ENCODE measurements at regions of chr17 and their contacts with region 1.

Region 1: DNA sequence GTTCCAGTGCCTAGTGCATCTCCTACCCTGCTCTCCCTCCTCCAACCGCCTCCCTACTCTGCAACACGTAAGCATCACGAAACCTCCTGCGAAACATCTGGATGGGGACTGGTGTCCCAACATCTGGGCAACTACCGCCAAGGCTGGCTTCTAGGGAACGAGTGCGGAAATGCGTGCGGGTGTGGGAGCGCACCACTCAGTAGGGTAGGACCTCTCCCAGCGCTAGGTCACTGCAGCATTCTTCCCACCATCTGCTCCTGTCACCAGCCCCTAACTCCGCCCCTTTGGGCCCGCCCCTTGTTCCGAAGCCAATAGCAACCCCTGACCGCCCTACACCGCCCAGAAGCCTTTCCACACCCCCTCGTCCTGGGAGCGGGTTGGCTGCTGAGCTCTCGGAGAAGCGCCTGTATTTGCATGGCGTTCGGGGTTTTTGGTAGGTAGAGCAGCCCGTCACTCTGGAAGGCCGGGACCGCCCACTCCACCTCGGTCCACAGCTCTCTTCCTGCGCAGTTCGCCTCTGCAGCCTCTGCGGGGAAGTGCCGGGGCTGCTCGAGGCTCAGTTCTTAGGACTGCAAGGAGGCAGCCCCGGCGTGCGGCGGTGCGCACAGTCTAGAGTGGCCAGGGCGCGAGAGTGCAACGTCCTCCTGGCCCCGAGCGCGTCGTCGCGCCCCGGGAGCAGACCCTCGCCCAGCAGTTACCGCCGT is at the start of gene HS3ST3B1:
- DNase-seq: peak; percentile 99
- H3K4me3 Mint-ChIP-seq: peak within 1 kb of the TSS; percentile 90
- H3K27ac Mint-ChIP-seq: peak within 1 kb of the TSS; percentile 81
- H3K4me1 Mint-ChIP-seq: peaks cover 13% of the 10 kb centered on the region
- H3K27me3 Mint-ChIP-seq: peaks cover 12% of the 10 kb centered on the region
- CTCF ChIP-seq: no peak
- total RNA-seq, gene HS3ST3B1: 3.4 and 3.8 TPM in 2 replicates

Region 2: GRCh38 chr17:13017659-13018459 is 1282.9 kb before region 1 on chr17 and contains the start of gene ELAC2:
- CTCF ChIA-PET with region 1: no interaction called
- POLR2A ChIA-PET with region 1: interaction called, 12 read pairs
- intact Hi-C with region 1: no loop called
- DNase-seq: peak; percentile 99
- H3K4me3 Mint-ChIP-seq: peak within 1 kb of the TSS; percentile 89
- H3K27ac Mint-ChIP-seq: peak within 1 kb of the TSS; percentile 91
- H3K4me1 Mint-ChIP-seq: peaks cover 6% of the 10 kb centered on the region
- H3K27me3 Mint-ChIP-seq: no peaks in the 10 kb centered on the region
- CTCF ChIP-seq: peak; percentile 13
- total RNA-seq, gene ELAC2: 67.1 and 67.4 TPM in 2 replicates

Region 3: GRCh38 chr17:13306310-13306962 is 994.3 kb before region 1 on chr17:
- CTCF ChIA-PET with region 1: no interaction called
- POLR2A ChIA-PET with region 1: no interaction called
- intact Hi-C with region 1: loop called (anchors 1 kb)
- DNase-seq: peak; percentile 94
- H3K4me3 Mint-ChIP-seq: no peak overlapping the region
- H3K27ac Mint-ChIP-seq: no peak overlapping the region
- H3K4me1 Mint-ChIP-seq: peaks cover 9% of the 10 kb centered on the region
- H3K27me3 Mint-ChIP-seq: no peaks in the 10 kb centered on the region
- CTCF ChIP-seq: peak; percentile 38

Region 4: GRCh38 chr17:13601776-13602551 is 698.8 kb before region 1 on chr17 and contains the start of gene HS3ST3A1:
- CTCF ChIA-PET with region 1: interaction called, 50 read pairs
- POLR2A ChIA-PET with region 1: interaction called, 57 read pairs
- intact Hi-C with region 1: loop called (anchors 1 kb)
- DNase-seq: peak; percentile 78
- H3K4me3 Mint-ChIP-seq: peak within 1 kb of the TSS; percentile 88
- H3K27ac Mint-ChIP-seq: peak within 1 kb of the TSS; percentile 63
- H3K4me1 Mint-ChIP-seq: peaks cover 30% of the 10 kb centered on the region
- H3K27me3 Mint-ChIP-seq: no peaks in the 10 kb centered on the region
- CTCF ChIP-seq: no peak
- total RNA-seq, gene HS3ST3A1: 7.3 and 10.4 TPM in 2 replicates

Region 5: DNA sequence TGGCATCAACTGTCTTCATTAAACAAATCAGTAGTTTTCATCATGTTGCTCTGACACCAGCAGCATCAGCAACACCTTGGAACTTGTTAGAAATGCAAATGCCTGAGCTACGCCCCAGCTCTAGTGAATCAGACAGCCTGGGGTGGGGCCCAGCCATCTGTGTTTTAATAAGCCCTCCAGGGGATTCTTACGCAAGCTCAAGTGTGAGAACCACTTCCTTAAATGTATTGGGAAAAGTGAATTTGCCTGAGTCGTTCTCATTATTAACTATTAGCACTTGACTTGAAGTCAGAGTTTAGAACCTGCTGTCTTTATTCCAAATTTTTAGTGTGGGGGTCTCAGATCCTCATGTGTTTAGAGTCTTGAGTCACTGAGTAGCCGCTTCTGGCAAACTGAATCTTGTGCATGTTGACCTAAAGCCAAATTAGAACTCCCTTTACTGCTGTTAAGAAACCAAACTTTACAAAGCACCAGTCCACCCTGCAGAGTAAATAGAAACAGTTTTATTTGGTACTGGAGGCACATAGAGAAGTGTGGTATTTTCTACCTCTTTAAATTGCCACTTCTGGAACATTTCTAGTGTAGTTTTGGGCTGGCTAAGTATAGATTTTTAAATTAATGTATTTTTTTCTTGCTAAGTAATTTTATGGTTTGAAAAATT is 368.8 kb before region 1 on chr17:
- CTCF ChIA-PET with region 1: interaction called, 6 read pairs
- POLR2A ChIA-PET with region 1: interaction called, 3 read pairs
- intact Hi-C with region 1: loop called (anchors 2 kb)
- DNase-seq: peak; percentile 94
- H3K4me3 Mint-ChIP-seq: no peak overlapping the region
- H3K27ac Mint-ChIP-seq: peak overlapping the region; percentile 50
- H3K4me1 Mint-ChIP-seq: peaks cover 40% of the 10 kb centered on the region
- H3K27me3 Mint-ChIP-seq: no peaks in the 10 kb centered on the region
- CTCF ChIP-seq: no peak

Region 6: DNA sequence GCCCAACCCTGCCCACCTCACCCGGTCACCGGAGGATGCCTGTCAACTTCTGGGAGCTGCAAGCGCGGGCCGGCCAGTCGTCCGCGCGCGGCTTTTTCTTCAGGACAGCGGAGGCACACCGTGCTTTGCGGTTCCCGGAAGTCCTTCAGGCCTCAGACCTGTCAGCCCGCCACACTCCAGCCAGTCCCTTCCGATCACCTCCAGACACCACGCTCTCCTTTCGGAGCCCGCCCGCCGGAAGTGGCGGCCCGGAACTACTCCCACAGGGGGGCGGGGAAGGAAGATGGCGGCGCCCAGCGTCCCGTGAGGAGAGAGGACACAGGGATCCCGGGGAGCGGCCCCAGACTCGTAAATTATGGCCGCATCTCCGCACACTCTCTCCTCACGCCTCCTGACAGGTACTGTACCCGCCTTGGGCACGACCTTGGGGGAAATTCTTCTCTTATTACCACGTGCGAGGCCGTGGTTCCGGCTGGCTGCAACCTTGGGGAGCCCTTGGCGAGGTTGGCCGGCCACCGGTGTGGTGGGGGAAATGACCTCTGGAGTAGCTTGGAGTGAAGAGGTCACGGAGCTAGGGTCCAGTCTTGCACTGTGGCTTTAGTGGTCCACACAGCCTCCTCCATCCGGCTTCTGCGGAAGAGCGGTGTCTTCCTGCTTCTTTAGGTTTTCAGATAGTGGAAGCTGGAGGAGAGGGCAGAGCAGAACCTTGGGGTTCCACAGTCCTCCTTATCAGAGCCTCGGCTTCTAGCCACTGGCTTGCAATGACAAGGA is 231.3 kb before region 1 on chr17 and contains the start of gene COX10:
- CTCF ChIA-PET with region 1: interaction called, 5 read pairs
- POLR2A ChIA-PET with region 1: interaction called, 46 read pairs
- intact Hi-C with region 1: loop called (anchors 2 kb)
- DNase-seq: peak; percentile 92
- H3K4me3 Mint-ChIP-seq: peak within 1 kb of the TSS; percentile 95
- H3K27ac Mint-ChIP-seq: peak within 1 kb of the TSS; percentile 96
- H3K4me1 Mint-ChIP-seq: peaks cover 29% of the 10 kb centered on the region
- H3K27me3 Mint-ChIP-seq: no peaks in the 10 kb centered on the region
- CTCF ChIP-seq: no peak
- total RNA-seq, gene COX10: 16.4 and 21.0 TPM in 2 replicates

Region 7: DNA sequence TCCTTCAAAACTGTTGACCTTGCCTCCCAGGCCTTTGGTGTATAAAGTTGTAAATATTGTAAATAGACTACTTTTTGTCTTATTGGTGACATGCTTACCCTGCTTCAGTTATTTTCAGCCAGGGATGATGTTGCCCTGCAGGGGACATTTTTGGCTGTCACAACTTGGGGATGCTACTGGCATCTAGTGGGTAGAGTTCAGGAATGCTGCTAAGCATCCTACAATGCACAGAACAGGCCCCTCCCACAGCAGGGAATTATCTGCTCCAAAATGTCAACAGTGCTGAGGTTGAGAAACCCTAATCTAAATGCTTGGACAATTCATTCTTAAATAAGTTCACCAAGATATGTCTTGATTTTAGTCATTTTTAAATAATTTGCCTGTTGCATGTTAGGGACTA is 504.6 kb after region 1 on chr17:
- CTCF ChIA-PET with region 1: no interaction called
- POLR2A ChIA-PET with region 1: no interaction called
- intact Hi-C with region 1: loop called (anchors 10 kb)
- DNase-seq: peak; percentile 41
- H3K4me3 Mint-ChIP-seq: no peak overlapping the region
- H3K27ac Mint-ChIP-seq: no peak overlapping the region
- H3K4me1 Mint-ChIP-seq: peaks cover 6% of the 10 kb centered on the region
- H3K27me3 Mint-ChIP-seq: no peaks in the 10 kb centered on the region
- CTCF ChIP-seq: no peak

Measured in MCF 10A (cell line).